Activated naive CD4-positive, alpha-beta T cell treated with anti-CD3 and anti-CD28 coated beads for 36 hours (primary cell): ENCODE measurements at regions of chr4 and their contacts with region 1.

Region 1: GRCh38 chr4:3047464-3048286 is 26.7 kb downstream of the HTT-AS start:
- DNase-seq: peak; percentile 91
- H3K4me3 Mint-ChIP-seq: peak overlapping the region; percentile 28
- H3K27ac Mint-ChIP-seq: peak overlapping the region; percentile 54
- H3K4me1 Mint-ChIP-seq: peaks cover 31% of the 10 kb centered on the region
- H3K27me3 Mint-ChIP-seq: no peaks in the 10 kb centered on the region

Region 2: DNA sequence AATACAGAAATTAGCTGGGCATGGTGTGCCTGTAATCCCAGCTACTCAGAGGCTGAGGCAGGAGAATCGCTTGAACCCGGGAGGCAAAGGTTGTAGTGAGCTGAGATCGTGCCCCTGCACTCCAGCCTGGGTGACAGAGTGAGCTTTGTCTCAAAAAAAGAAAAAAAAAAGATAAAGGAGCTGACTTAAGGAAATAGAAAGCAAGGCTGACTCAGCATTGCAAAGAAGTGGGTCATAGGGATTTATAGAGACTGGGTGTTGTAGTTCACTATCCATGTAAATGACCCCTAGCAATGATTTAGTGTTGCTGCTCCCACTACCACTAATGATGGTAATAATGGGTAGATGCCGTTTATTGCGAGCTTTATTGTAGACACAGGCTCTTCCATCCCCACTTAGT is 156.4 kb before region 1 on chr4:
- CTCF ChIA-PET with region 1: no interaction called
- intact Hi-C with region 1: no loop called
- DNase-seq: no peak
- H3K4me3 Mint-ChIP-seq: no peak overlapping the region
- H3K27ac Mint-ChIP-seq: no peak overlapping the region
- H3K4me1 Mint-ChIP-seq: peaks cover 2% of the 10 kb centered on the region
- H3K27me3 Mint-ChIP-seq: no peaks in the 10 kb centered on the region

Region 3: GRCh38 chr4:3011456-3012220 is 36.0 kb before region 1 on chr4:
- CTCF ChIA-PET with region 1: no interaction called
- intact Hi-C with region 1: no loop called
- DNase-seq: no peak
- H3K4me3 Mint-ChIP-seq: no peak overlapping the region
- H3K27ac Mint-ChIP-seq: no peak overlapping the region
- H3K4me1 Mint-ChIP-seq: peaks cover 17% of the 10 kb centered on the region
- H3K27me3 Mint-ChIP-seq: peaks cover 2% of the 10 kb centered on the region

Region 4: GRCh38 chr4:3074078-3074795 is 26.6 kb after region 1 on chr4 and contains the starts of genes HTT and HTT-AS:
- CTCF ChIA-PET with region 1: no interaction called
- intact Hi-C with region 1: loop called (anchors 1 kb)
- DNase-seq: peak; percentile 99
- H3K4me3 Mint-ChIP-seq: peak within 1 kb of the TSS; percentile 83
- H3K27ac Mint-ChIP-seq: peak within 1 kb of the TSS; percentile 87
- H3K4me1 Mint-ChIP-seq: peaks cover 27% of the 10 kb centered on the region
- H3K27me3 Mint-ChIP-seq: no peaks in the 10 kb centered on the region
- total RNA-seq, gene HTT: 91.6 to 94.1 TPM
- total RNA-seq, gene HTT-AS: not detected

Region 5: GRCh38 chr4:3136453-3136852 is 88.8 kb after region 1 on chr4:
- CTCF ChIA-PET with region 1: interaction called, 3 read pairs
- intact Hi-C with region 1: loop called (anchors 1 kb)
- DNase-seq: no peak
- H3K4me3 Mint-ChIP-seq: no peak overlapping the region
- H3K27ac Mint-ChIP-seq: no peak overlapping the region
- H3K4me1 Mint-ChIP-seq: no peaks in the 10 kb centered on the region
- H3K27me3 Mint-ChIP-seq: no peaks in the 10 kb centered on the region

Region 6: GRCh38 chr4:3241898-3242524 is 194.3 kb after region 1 on chr4:
- CTCF ChIA-PET with region 1: no interaction called
- intact Hi-C with region 1: loop called (anchors 2 kb)
- DNase-seq: no peak
- H3K4me3 Mint-ChIP-seq: no peak overlapping the region
- H3K27ac Mint-ChIP-seq: no peak overlapping the region
- H3K4me1 Mint-ChIP-seq: peaks cover 12% of the 10 kb centered on the region
- H3K27me3 Mint-ChIP-seq: no peaks in the 10 kb centered on the region

Region 7: GRCh38 chr4:3346146-3346545 is 298.5 kb after region 1 on chr4:
- CTCF ChIA-PET with region 1: no interaction called
- intact Hi-C with region 1: loop called (anchors 2 kb)
- DNase-seq: peak; percentile 71
- H3K4me3 Mint-ChIP-seq: no peak overlapping the region
- H3K27ac Mint-ChIP-seq: no peak overlapping the region
- H3K4me1 Mint-ChIP-seq: peaks cover 18% of the 10 kb centered on the region
- H3K27me3 Mint-ChIP-seq: no peaks in the 10 kb centered on the region

Region 8: DNA sequence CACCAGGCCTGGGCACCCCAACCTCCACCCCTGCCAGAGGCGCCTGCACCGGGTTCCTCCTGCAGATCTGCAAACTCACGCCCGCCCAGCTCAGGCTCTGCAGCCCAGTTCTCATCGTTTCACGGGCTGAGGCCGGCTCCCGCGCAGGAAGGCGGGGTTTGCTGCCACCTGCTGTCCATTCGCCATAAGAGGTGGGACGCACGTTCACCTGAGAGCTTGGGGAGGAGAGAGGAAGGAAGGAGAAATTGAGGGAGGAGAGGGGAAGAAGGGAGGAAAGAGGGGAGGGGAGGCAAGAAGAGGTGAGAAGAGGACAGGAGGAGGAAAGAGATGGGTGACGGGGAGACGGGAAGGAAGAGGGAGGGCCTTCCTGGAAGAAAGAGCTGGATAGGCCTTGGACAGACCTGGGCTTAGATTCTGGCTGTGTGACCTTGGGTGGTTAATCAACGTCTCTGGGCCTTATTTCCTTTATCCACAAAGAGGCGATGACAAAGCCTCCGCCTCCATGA is 833.0 kb after region 1 on chr4:
- CTCF ChIA-PET with region 1: no interaction called
- intact Hi-C with region 1: loop called (anchors 2 kb)
- DNase-seq: peak; percentile 85
- H3K4me3 Mint-ChIP-seq: no peak overlapping the region
- H3K27ac Mint-ChIP-seq: no peak overlapping the region
- H3K4me1 Mint-ChIP-seq: peaks cover 12% of the 10 kb centered on the region
- H3K27me3 Mint-ChIP-seq: peaks cover 44% of the 10 kb centered on the region